Activated CD4-positive, alpha-beta memory T cell treated with anti-CD3 and anti-CD28 coated beads for 36 hours (primary cell): ENCODE measurements at regions of chr4 and their contacts with region 1.

Region 1: GRCh38 chr4:40840985-40841571 is 91.3 kb downstream of the NSUN7 start:
- DNase-seq: peak; percentile 90
- H3K4me3 Mint-ChIP-seq: no peak overlapping the region
- H3K27ac Mint-ChIP-seq: no peak overlapping the region
- H3K4me1 Mint-ChIP-seq: peaks cover 2% of the 10 kb centered on the region
- H3K27me3 Mint-ChIP-seq: peaks cover 8% of the 10 kb centered on the region

Region 2: DNA sequence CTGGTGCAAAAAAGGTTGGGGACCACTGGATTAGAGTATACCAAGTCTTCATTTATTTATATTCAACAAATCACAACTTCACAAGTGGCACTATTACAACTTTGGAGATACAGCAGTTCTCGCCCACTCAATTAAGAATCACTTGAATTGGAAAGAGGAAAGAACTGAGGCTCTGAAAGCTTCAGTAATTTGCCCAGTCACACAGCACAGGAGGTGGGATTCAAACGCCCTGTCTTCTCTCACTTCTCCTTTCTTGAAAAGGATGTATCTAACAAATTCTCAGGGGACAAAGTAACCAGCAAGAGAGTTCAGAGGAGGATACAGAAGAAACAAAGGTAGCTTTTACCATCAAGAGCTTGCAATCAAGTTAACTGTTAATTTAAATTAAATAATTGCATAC is 1214.8 kb before region 1 on chr4:
- CTCF ChIA-PET with region 1: no interaction called
- POLR2A ChIA-PET with region 1: no interaction called
- intact Hi-C with region 1: no loop called
- DNase-seq: no peak
- H3K4me3 Mint-ChIP-seq: no peak overlapping the region
- H3K27ac Mint-ChIP-seq: no peak overlapping the region
- H3K4me1 Mint-ChIP-seq: peaks cover 9% of the 10 kb centered on the region
- H3K27me3 Mint-ChIP-seq: no peaks in the 10 kb centered on the region

Region 3: GRCh38 chr4:39697740-39698423 is 1143.2 kb before region 1 on chr4 and contains the start of gene UBE2K:
- CTCF ChIA-PET with region 1: no interaction called
- POLR2A ChIA-PET with region 1: no interaction called
- intact Hi-C with region 1: loop called (anchors 5 kb)
- DNase-seq: peak; percentile 92
- H3K4me3 Mint-ChIP-seq: peak within 1 kb of the TSS; percentile 96
- H3K27ac Mint-ChIP-seq: peak within 1 kb of the TSS; percentile 96
- H3K4me1 Mint-ChIP-seq: peaks cover 36% of the 10 kb centered on the region
- H3K27me3 Mint-ChIP-seq: no peaks in the 10 kb centered on the region
- total RNA-seq, gene UBE2K: 81.4 to 83.5 TPM

Region 4: DNA sequence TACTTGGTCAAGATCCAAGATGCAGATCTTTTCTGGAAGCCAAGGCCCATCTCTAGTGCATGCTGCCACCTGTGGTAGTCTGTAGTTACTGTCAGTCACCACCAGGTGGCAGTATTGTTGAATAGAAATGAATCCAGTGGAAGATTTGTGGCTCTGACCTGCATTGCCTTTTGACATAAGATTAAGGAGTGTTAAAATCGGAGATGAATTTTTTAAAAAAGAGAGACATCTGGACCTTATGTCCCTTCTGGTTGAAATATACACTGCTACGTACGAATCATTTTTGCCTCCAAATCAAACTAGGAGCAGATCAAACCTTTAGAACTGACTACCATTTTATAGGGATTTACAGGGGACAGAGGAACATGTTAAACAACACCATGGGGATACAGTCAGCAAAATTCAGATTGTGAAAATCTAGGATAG is 691.1 kb before region 1 on chr4:
- CTCF ChIA-PET with region 1: no interaction called
- POLR2A ChIA-PET with region 1: no interaction called
- intact Hi-C with region 1: loop called (anchors 5 kb)
- DNase-seq: peak; percentile 74
- H3K4me3 Mint-ChIP-seq: no peak overlapping the region
- H3K27ac Mint-ChIP-seq: no peak overlapping the region
- H3K4me1 Mint-ChIP-seq: peaks cover 27% of the 10 kb centered on the region
- H3K27me3 Mint-ChIP-seq: no peaks in the 10 kb centered on the region

Region 5: DNA sequence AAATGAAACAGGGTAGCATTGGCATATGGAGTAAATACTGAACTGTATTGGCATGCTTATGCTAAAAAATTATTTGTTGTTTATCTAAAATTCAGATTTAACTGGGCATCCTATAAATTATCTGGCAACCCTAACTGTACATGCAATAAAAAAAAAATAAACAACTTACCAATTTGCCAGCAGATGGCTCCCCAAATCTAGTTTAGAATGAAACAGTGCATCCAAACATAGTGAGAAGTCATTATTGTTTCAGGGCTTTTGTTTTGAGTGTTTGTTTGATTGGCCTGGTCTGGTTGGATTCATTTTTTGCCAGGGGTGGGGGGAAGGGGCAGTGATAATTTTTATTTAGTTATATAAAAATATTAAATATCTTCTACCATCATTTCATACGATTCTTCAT is 104.2 kb before region 1 on chr4:
- CTCF ChIA-PET with region 1: interaction called, 86 read pairs
- POLR2A ChIA-PET with region 1: no interaction called
- intact Hi-C with region 1: loop called (anchors 1 kb)
- DNase-seq: no peak
- H3K4me3 Mint-ChIP-seq: no peak overlapping the region
- H3K27ac Mint-ChIP-seq: no peak overlapping the region
- H3K4me1 Mint-ChIP-seq: peaks cover 3% of the 10 kb centered on the region
- H3K27me3 Mint-ChIP-seq: peaks cover 5% of the 10 kb centered on the region

Region 6: DNA sequence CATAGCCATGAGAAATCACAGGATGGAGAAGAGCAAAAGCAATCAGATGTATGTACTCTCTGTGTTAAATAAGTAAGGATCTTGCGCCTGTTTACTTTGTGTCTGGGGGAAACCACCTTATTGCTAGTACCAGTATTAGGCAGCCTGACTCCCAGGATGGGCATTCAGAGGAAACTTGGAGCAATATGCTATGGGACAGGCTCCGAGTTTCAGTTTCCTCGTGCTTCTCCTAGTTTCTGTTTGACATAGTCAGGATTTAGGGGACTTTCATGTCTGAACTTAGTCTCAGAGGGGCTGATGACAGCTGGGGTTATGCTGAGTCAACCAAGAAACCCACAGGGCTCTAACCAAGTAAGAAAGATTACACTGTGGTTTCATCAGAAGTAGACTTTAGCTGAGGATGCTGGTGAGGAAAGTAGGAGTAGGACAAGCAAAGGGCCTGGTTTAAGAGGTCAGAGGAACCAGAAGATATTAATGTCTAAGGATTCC is 77.8 kb before region 1 on chr4:
- CTCF ChIA-PET with region 1: no interaction called
- POLR2A ChIA-PET with region 1: no interaction called
- intact Hi-C with region 1: loop called (anchors 2 kb)
- DNase-seq: peak; percentile 76
- H3K4me3 Mint-ChIP-seq: no peak overlapping the region
- H3K27ac Mint-ChIP-seq: peak overlapping the region; percentile 16
- H3K4me1 Mint-ChIP-seq: peaks cover 11% of the 10 kb centered on the region
- H3K27me3 Mint-ChIP-seq: peaks cover 4% of the 10 kb centered on the region

Region 7: GRCh38 chr4:40924096-40924792 is 83.2 kb after region 1 on chr4:
- CTCF ChIA-PET with region 1: interaction called, 22 read pairs
- POLR2A ChIA-PET with region 1: no interaction called
- intact Hi-C with region 1: no loop called
- DNase-seq: peak; percentile 87
- H3K4me3 Mint-ChIP-seq: no peak overlapping the region
- H3K27ac Mint-ChIP-seq: peak overlapping the region; percentile 64
- H3K4me1 Mint-ChIP-seq: peaks cover 15% of the 10 kb centered on the region
- H3K27me3 Mint-ChIP-seq: peaks cover 14% of the 10 kb centered on the region